HAP-1 (cell line): ENCODE measurements at regions of chr16 and their contacts with region 1.

Region 1: GRCh38 chr16:24203675-24204074 is 52.5 kb upstream of the CACNG3 start:
- DNase-seq: no peak
- H3K4me3 ChIP-seq: no peak overlapping the region
- H3K4me1 ChIP-seq: no peaks in the 10 kb centered on the region
- H3K27me3 ChIP-seq: no peaks in the 10 kb centered on the region

Region 2: GRCh38 chr16:23896832-23897821 is 306.5 kb before region 1 on chr16:
- in situ Hi-C with region 1: no loop called
- DNase-seq: no peak
- H3K4me3 ChIP-seq: no peak overlapping the region
- H3K4me1 ChIP-seq: no peaks in the 10 kb centered on the region
- H3K27me3 ChIP-seq: peaks cover 8% of the 10 kb centered on the region; the same call in 1 of the 2 replicates

Region 3: DNA sequence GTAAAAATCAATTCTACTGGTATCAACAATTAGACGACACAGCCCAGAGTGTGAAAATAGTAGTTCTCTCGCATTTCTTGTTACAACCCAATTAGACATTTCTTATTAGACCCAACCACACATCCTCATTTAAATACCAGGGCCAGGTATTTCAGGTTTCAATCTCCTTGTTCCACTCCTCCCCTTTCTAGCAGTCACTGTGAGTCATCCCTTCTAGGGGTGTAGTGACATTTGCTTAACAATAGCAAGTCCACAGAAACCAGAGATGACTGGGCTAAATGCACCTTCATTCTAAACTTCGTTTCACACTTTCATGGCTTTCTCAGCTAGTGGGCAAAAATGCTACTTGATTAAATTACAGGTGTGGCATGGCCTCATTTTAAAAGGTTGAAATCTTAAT is 64.4 kb before region 1 on chr16:
- in situ Hi-C with region 1: loop called (anchors 5 kb)
- DNase-seq: no peak
- H3K4me3 ChIP-seq: no peak overlapping the region
- H3K4me1 ChIP-seq: no peaks in the 10 kb centered on the region
- H3K27me3 ChIP-seq: no peaks in the 10 kb centered on the region